Naive thymus-derived CD4-positive, alpha-beta T cell (primary cell): ENCODE measurements at regions of chr14 and their contacts with region 1.

Region 1: DNA sequence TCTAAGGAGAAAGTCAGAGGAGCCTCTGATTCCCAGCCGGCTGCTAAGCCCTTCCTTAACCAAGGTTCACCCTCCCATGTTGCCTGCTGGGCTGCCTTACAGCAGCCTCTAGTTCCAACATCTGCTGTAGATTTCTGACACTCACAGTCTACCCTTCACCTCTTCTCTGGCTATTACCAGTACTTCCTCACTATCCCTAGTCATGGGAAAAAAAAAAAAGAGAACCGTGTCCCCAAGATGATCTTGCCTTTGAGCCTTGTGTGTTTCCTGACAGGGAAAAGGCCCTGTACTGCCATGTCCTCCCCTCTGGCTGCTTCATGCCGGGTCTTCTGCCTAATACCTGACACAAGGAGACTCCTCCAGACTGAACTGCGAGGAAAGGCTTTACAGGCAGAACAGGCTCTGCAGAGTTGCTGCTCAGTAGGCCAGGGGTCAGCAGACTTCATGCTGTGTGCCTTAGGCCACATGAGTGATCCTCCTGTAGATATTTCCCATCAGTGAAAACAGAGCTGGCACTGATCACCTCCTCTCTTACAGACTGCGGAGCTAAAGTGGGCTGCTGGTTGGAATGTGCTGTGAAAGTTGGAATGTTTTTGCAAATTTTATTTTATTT is 46.8 kb downstream of the PRKCH start:
- DNase-seq: no peak
- ATAC-seq: no peak
- H3K4me3 ChIP-seq: no peak overlapping the region
- H3K4me3 Mint-ChIP-seq: peak overlapping the region in 7 of 10 donors; percentile 27 to 81 (median 68)
- H3K27ac ChIP-seq: peak overlapping the region; percentile 50
- H3K27ac Mint-ChIP-seq: peak overlapping the region in 5 of 9 donors; percentile 25 to 93 (median 75)
- H3K4me1 ChIP-seq: peaks cover 72 to 91% of the 10 kb centered on the region in 2 donors
- H3K4me1 Mint-ChIP-seq: peaks cover 0 to 54% (median 33%) of the 10 kb centered on the region in 7 donors
- H3K27me3 ChIP-seq: no peaks in the 10 kb centered on the region
- H3K27me3 Mint-ChIP-seq: no peaks in the 10 kb centered on the region

Region 2: GRCh38 chr14:61355892-61356325 is 12.3 kb before region 1 on chr14:
- CTCF ChIA-PET with region 1: no interaction called
- POLR2A ChIA-PET with region 1: interaction called, 3 read pairs
- intact Hi-C with region 1: loop called (anchors 1 kb)
- DNase-seq: peak in 2 of 9 donors; percentile 50 to 73
- ATAC-seq: peak; percentile 46
- H3K4me3 ChIP-seq: peak overlapping the region; percentile 15
- H3K4me3 Mint-ChIP-seq: peak overlapping the region; percentile 65 to 97 (median 80)
- H3K27ac ChIP-seq: peak overlapping the region; percentile 14
- H3K27ac Mint-ChIP-seq: peak overlapping the region in 8 of 9 donors; percentile 68 to 97 (median 89)
- H3K4me1 ChIP-seq: peaks cover 93% of the 10 kb centered on the region in 2 donors
- H3K4me1 Mint-ChIP-seq: peaks cover 0 to 96% (median 74%) of the 10 kb centered on the region in 7 donors
- H3K27me3 ChIP-seq: no peaks in the 10 kb centered on the region
- H3K27me3 Mint-ChIP-seq: no peaks in the 10 kb centered on the region

Region 3: GRCh38 chr14:61381547-61381946 is 13.3 kb after region 1 on chr14:
- CTCF ChIA-PET with region 1: interaction called, 3 read pairs
- POLR2A ChIA-PET with region 1: interaction called, 7 read pairs
- intact Hi-C with region 1: loop called (anchors 1 to 2 kb)
- DNase-seq: no peak
- ATAC-seq: no peak
- H3K4me3 ChIP-seq: no peak overlapping the region
- H3K4me3 Mint-ChIP-seq: peak overlapping the region in 8 of 10 donors; percentile 7 to 69 (median 59)
- H3K27ac ChIP-seq: peak overlapping the region; percentile 32
- H3K27ac Mint-ChIP-seq: peak overlapping the region in 6 of 9 donors; percentile 24 to 93 (median 86)
- H3K4me1 ChIP-seq: peaks cover 97 to 99% of the 10 kb centered on the region in 2 donors
- H3K4me1 Mint-ChIP-seq: peaks cover 0 to 56% (median 46%) of the 10 kb centered on the region in 7 donors
- H3K27me3 ChIP-seq: no peaks in the 10 kb centered on the region
- H3K27me3 Mint-ChIP-seq: no peaks in the 10 kb centered on the region

Region 4: DNA sequence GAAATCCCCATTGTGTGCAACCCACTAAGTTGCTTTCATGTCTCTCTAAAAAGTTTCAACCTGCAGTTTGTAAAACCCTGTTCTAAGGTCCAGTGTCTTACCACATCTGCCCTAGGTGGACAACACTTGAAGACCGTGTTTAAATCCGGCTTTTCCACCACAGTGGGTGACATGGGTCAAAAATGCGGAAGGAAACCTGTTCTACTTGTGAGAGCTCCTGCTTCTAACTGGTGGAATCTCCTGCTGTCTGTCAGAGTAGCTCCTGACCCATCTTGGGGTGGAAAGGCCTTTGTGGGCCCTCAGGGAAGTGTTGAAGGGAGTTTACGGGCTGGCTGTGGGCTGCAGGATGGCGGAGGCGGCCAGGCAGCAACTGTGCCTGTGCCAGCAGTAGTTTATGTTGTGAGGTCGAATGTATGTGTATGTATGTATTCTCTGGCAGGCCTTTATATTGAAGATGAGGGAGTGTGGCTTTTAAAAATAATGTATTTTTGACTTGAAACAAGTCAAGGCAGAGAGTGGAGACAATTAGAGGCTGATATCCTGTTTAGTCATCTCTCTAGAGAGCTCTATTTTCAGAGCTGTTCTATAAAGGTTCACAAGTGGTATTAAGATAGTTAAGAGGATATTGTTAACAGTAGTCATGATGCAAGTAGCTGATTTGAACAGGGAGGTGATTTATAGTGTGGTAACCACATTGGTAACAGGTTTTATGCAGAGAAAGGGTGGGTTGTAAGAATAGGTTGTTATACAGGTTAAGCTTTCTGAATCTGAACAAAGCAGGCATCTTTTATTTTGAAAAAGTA is 20.2 kb after region 1 on chr14:
- CTCF ChIA-PET with region 1: interaction called, 3 read pairs
- POLR2A ChIA-PET with region 1: interaction called, 7 read pairs
- intact Hi-C with region 1: loop called in 1 of 2 experiments (anchors 2 kb)
- DNase-seq: peak in 6 of 9 donors; percentile 38 to 56 (median 50)
- ATAC-seq: peak; percentile 76
- H3K4me3 ChIP-seq: peak overlapping the region; percentile 50
- H3K4me3 Mint-ChIP-seq: peak overlapping the region in 1 of 10 donors; percentile 74
- H3K27ac ChIP-seq: peak overlapping the region; percentile 71
- H3K27ac Mint-ChIP-seq: no peak overlapping the region
- H3K4me1 ChIP-seq: peaks cover 93 to 96% of the 10 kb centered on the region in 2 donors
- H3K4me1 Mint-ChIP-seq: peaks cover 0 to 46% (median 12%) of the 10 kb centered on the region in 7 donors
- H3K27me3 ChIP-seq: no peaks in the 10 kb centered on the region
- H3K27me3 Mint-ChIP-seq: no peaks in the 10 kb centered on the region